ENCODE measurements at regions of chr10 and their contacts with region 1.

Region 1: GRCh38 chr10:112949875-112950507 is at the start of gene TCF7L2:
- DNase-seq: peak; percentile 58
- ATAC-seq: peak; percentile 30
- H3K4me3 Mint-ChIP-seq: peak within 1 kb of the TSS; percentile 86
- H3K27ac Mint-ChIP-seq: peak within 1 kb of the TSS; percentile 86
- H3K4me1 Mint-ChIP-seq: peaks cover 24% of the 10 kb centered on the region
- H3K27me3 Mint-ChIP-seq: peaks cover 51% of the 10 kb centered on the region
- total RNA-seq, gene TCF7L2: 0.87 to 1.7 TPM

Region 2: GRCh38 chr10:111146025-111146640 is 1803.9 kb before region 1 on chr10:
- CTCF ChIA-PET with region 1: no interaction called
- POLR2A ChIA-PET with region 1: no interaction called
- intact Hi-C with region 1: no loop called
- DNase-seq: no peak
- ATAC-seq: peak; percentile 16
- H3K4me3 Mint-ChIP-seq: no peak overlapping the region
- H3K27ac Mint-ChIP-seq: no peak overlapping the region
- H3K4me1 Mint-ChIP-seq: peaks cover 8% of the 10 kb centered on the region
- H3K27me3 Mint-ChIP-seq: peaks cover 12% of the 10 kb centered on the region

Region 3: GRCh38 chr10:112526139-112526538 is 423.9 kb before region 1 on chr10:
- CTCF ChIA-PET with region 1: no interaction called
- POLR2A ChIA-PET with region 1: no interaction called
- intact Hi-C with region 1: loop called in 1 of 2 experiments (anchors 10 kb)
- DNase-seq: peak; percentile 23
- ATAC-seq: peak; percentile 94
- H3K4me3 Mint-ChIP-seq: no peak overlapping the region
- H3K27ac Mint-ChIP-seq: no peak overlapping the region
- H3K4me1 Mint-ChIP-seq: peaks cover 35% of the 10 kb centered on the region
- H3K27me3 Mint-ChIP-seq: no peaks in the 10 kb centered on the region